Posterior cingulate gyrus (tissue), 11 donors: ENCODE measurements at regions of chr18 and their contacts with region 1.

Region 1: GRCh38 chr18:26813043-26813442 is 52.5 kb downstream of the AQP4 start:
- DNase-seq: peak in 4 of 10 donors; percentile 18 to 80 (median 42)

Region 2: GRCh38 chr18:26771524-26771923 is 41.5 kb before region 1 on chr18:
- intact Hi-C with region 1: no loop called
- DNase-seq: no peak

Region 3: GRCh38 chr18:26963292-26963691 is 150.2 kb after region 1 on chr18:
- intact Hi-C with region 1: loop called (anchors 5 kb)
- DNase-seq: no peak